ENCODE measurements at regions of chr17 and their contacts with region 1.

Region 1: GRCh38 chr17:19728079-19728495 is 11.7 kb upstream of the SLC47A2 start:
- DNase-seq: peak; percentile 81 to 94 (median 88)
- H3K4me3 ChIP-seq: no peak overlapping the region
- H3K27ac ChIP-seq: peak overlapping the region; percentile 78 to 93
- H3K4me1 ChIP-seq: peaks cover 22% of the 10 kb centered on the region
- H3K27me3 ChIP-seq: no peaks in the 10 kb centered on the region
- CTCF ChIP-seq: no peak
- EP300 ChIP-seq: peak; percentile 31
- POLR2A ChIP-seq: no peak

Region 2: GRCh38 chr17:19664136-19664820 is 63.8 kb before region 1 on chr17:
- intact Hi-C with region 1: loop called in 1 of 4 experiments (anchors 10 kb)
- DNase-seq: no peak
- H3K4me3 ChIP-seq: no peak overlapping the region
- H3K27ac ChIP-seq: no peak overlapping the region
- H3K4me1 ChIP-seq: no peaks in the 10 kb centered on the region
- H3K27me3 ChIP-seq: no peaks in the 10 kb centered on the region
- CTCF ChIP-seq: no peak
- EP300 ChIP-seq: no peak
- POLR2A ChIP-seq: no peak

Region 3: DNA sequence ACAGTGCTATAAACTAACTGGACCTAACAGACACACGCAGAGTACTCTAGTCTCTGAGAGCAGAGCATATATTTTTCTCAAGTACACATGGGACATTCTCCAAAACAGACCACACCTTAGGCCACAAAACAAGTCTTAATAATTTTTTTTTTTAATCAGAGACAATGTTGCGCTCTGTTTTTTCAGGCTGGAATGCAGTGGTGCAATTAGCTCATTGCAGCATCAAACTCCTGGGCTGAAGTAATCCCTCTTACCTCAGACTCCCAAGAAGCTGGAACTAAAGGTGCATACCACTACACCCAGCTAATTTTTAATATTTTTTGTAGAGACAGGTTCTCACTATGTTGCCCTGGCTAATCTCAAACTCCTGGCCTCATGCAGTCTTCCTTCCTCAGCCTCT is 102.0 kb after region 1 on chr17:
- intact Hi-C with region 1: no loop called
- DNase-seq: no peak
- H3K4me3 ChIP-seq: no peak overlapping the region
- H3K27ac ChIP-seq: no peak overlapping the region
- H3K4me1 ChIP-seq: no peaks in the 10 kb centered on the region
- H3K27me3 ChIP-seq: no peaks in the 10 kb centered on the region
- CTCF ChIP-seq: no peak
- EP300 ChIP-seq: no peak
- POLR2A ChIP-seq: no peak

Region 4: GRCh38 chr17:20141198-20141972 is 413.3 kb after region 1 on chr17:
- intact Hi-C with region 1: no loop called
- DNase-seq: no peak
- H3K4me3 ChIP-seq: no peak overlapping the region
- H3K27ac ChIP-seq: no peak overlapping the region
- H3K4me1 ChIP-seq: peaks cover 4% of the 10 kb centered on the region
- H3K27me3 ChIP-seq: no peaks in the 10 kb centered on the region
- CTCF ChIP-seq: no peak
- EP300 ChIP-seq: no peak
- POLR2A ChIP-seq: no peak